ENCODE measurements at regions of chr15 and their contacts with region 1.

Region 1: GRCh38 chr15:48877630-48878595 is at the start of gene EID1:
- DNase-seq: peak; percentile 87 to 97 (median 88)
- H3K4me3 ChIP-seq: peak within 1 kb of the TSS; percentile 63 to 99 (median 87)
- H3K27ac ChIP-seq: peak within 1 kb of the TSS; percentile 84 to 98 (median 96)
- H3K27me3 ChIP-seq: no peaks in the 10 kb centered on the region
- CTCF ChIP-seq: peak in 49 of 56 donors; percentile 1 to 66 (median 32)
- total RNA-seq, gene EID1: 107 to 240 (median 184) TPM

Region 2: DNA sequence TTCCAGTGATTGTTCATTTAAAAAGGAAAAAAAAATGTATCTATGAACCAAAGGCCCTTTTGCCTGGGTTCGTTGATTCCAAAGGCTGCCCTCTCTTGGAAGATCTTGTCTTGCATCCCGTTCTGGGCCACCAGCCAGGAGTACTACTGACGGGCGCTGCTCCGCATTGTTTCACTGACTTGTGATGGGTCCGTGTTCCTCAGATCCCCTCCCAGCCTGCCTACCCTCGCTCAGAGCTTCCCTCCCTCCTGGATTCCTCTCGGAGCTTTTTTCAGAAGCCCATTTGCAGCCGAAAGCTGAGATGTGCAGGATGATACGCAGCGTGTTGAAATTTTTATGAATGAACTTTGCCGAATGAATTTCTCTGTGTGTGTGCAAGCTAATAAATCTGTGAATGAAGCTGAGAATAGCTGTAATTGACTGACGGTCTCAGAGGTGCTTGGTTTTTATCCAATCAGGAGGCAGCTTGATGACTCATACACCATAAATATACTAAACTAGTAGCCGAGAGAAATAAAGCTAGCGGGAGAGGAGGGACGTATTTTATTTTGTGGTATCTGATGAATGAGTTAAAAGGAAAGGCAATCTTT is 85.7 kb after region 1 on chr15 and contains the start of gene SHC4:
- intact Hi-C with region 1: loop called (anchors 5 kb)
- DNase-seq: peak; percentile 60 to 84 (median 80)
- H3K4me3 ChIP-seq: peak within 1 kb of the TSS; percentile 30 to 90 (median 69)
- H3K27ac ChIP-seq: peak within 1 kb of the TSS in 26 of 59 donors; percentile 7 to 75 (median 36)
- H3K27me3 ChIP-seq: no peaks in the 10 kb centered on the region
- CTCF ChIP-seq: peak in 51 of 56 donors; percentile 10 to 68 (median 43)
- total RNA-seq, gene SHC4: 4.1 to 69.2 (median 16.4) TPM

Region 3: GRCh38 chr15:48975472-48976419 is 97.8 kb after region 1 on chr15:
- intact Hi-C with region 1: loop called in 1 of 2 experiments (anchors 2 kb)
- DNase-seq: peak; percentile 82 to 92 (median 90)
- H3K4me3 ChIP-seq: peak overlapping the region; percentile 43 to 74 (median 59)
- H3K27ac ChIP-seq: peak overlapping the region; percentile 75 to 99 (median 95)
- H3K27me3 ChIP-seq: no peaks in the 10 kb centered on the region
- CTCF ChIP-seq: peak; percentile 74 to 99 (median 88)

Region 4: GRCh38 chr15:49131403-49131802 is 253.5 kb after region 1 on chr15:
- intact Hi-C with region 1: no loop called
- DNase-seq: no peak
- H3K4me3 ChIP-seq: no peak overlapping the region
- H3K27ac ChIP-seq: peak overlapping the region in 3 of 59 donors; percentile 2 to 43 (median 25)
- H3K27me3 ChIP-seq: no peaks in the 10 kb centered on the region
- CTCF ChIP-seq: no peak

Region 5: GRCh38 chr15:49155110-49155833 is 277.4 kb after region 1 on chr15 and contains the start of gene COPS2:
- intact Hi-C with region 1: loop called (anchors 5 kb)
- DNase-seq: peak; percentile 89 to 98 (median 95)
- H3K4me3 ChIP-seq: peak within 1 kb of the TSS; percentile 71 to 100 (median 96)
- H3K27ac ChIP-seq: peak within 1 kb of the TSS; percentile 7 to 97 (median 90)
- H3K27me3 ChIP-seq: no peaks in the 10 kb centered on the region
- CTCF ChIP-seq: peak in 51 of 56 donors; percentile 17 to 72 (median 44)
- total RNA-seq, gene COPS2: 32.1 to 97.9 (median 73.1) TPM

Measured in dorsolateral prefrontal cortex (tissue), 120 donors.